ENCODE measurements at regions of chr15 and their contacts with region 1.

Region 1: GRCh38 chr15:25572191-25572590 is 133.4 kb upstream of the UBE3A start:
- DNase-seq: no peak
- H3K4me3 ChIP-seq: no peak overlapping the region
- CTCF ChIP-seq: no peak

Region 2: GRCh38 chr15:25633862-25634261 is 61.7 kb after region 1 on chr15:
- in situ Hi-C with region 1: loop called (anchors 5 kb)
- DNase-seq: no peak
- H3K4me3 ChIP-seq: no peak overlapping the region
- CTCF ChIP-seq: no peak